ENCODE measurements at regions of chr13 and their contacts with region 1.

Region 1: GRCh38 chr13:99307648-99308339 is 595 bp upstream of the GPR183 start:
- DNase-seq: peak; percentile 91
- H3K4me3 Mint-ChIP-seq: peak overlapping the region; percentile 93
- H3K27ac Mint-ChIP-seq: peak overlapping the region; percentile 99
- H3K4me1 Mint-ChIP-seq: peaks cover 72% of the 10 kb centered on the region
- H3K27me3 Mint-ChIP-seq: no peaks in the 10 kb centered on the region

Region 2: GRCh38 chr13:99214232-99214631 is 93.6 kb before region 1 on chr13:
- CTCF ChIA-PET with region 1: no interaction called
- POLR2A ChIA-PET with region 1: no interaction called
- intact Hi-C with region 1: loop called (anchors 1 kb)
- DNase-seq: peak; percentile 84
- H3K4me3 Mint-ChIP-seq: peak overlapping the region; percentile 78
- H3K27ac Mint-ChIP-seq: peak overlapping the region; percentile 78
- H3K4me1 Mint-ChIP-seq: peaks cover 78% of the 10 kb centered on the region
- H3K27me3 Mint-ChIP-seq: no peaks in the 10 kb centered on the region

Region 3: DNA sequence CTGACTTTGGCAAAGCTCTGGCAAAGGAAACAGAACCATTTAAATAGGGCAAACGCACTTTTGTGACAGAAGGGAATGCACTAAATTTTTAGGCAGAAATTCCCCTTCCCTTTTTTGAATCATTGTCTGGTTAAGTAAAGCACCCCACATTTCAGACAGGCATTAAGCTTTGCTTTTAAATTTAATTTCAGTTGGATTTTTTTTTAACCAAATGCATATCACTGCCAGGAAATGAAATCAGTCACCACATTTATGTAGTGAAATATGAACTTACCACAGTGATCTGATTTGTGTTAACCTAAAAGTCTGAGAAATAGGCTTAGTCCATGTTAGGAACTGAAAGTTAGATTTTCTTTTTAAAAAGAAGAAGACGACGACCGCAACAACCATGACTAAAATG is 11.4 kb before region 1 on chr13:
- CTCF ChIA-PET with region 1: interaction called, 8 read pairs
- POLR2A ChIA-PET with region 1: interaction called, 72 read pairs
- intact Hi-C with region 1: loop called (anchors 1 kb)
- DNase-seq: no peak
- H3K4me3 Mint-ChIP-seq: peak overlapping the region; percentile 47
- H3K27ac Mint-ChIP-seq: peak overlapping the region; percentile 88
- H3K4me1 Mint-ChIP-seq: peaks cover 80% of the 10 kb centered on the region
- H3K27me3 Mint-ChIP-seq: no peaks in the 10 kb centered on the region

Region 4: GRCh38 chr13:99380921-99381645 is 73.3 kb after region 1 on chr13:
- CTCF ChIA-PET with region 1: interaction called, 16 read pairs
- POLR2A ChIA-PET with region 1: interaction called, 15 read pairs
- intact Hi-C with region 1: no loop called
- DNase-seq: peak; percentile 87
- H3K4me3 Mint-ChIP-seq: peak overlapping the region; percentile 36
- H3K27ac Mint-ChIP-seq: peak overlapping the region; percentile 89
- H3K4me1 Mint-ChIP-seq: peaks cover 84% of the 10 kb centered on the region
- H3K27me3 Mint-ChIP-seq: no peaks in the 10 kb centered on the region